Posterior cingulate gyrus (tissue), 11 donors: ENCODE measurements at regions of chr11 and their contacts with region 1.

Region 1: GRCh38 chr11:44286268-44286880 is 23.6 kb downstream of the ALX4 start:
- DNase-seq: peak in 4 of 10 donors; percentile 17 to 58 (median 28)

Region 2: GRCh38 chr11:44133335-44133946 is 152.9 kb before region 1 on chr11:
- intact Hi-C with region 1: loop called (anchors 10 kb)
- DNase-seq: no peak

Region 3: GRCh38 chr11:44538375-44539054 is 252.1 kb after region 1 on chr11:
- intact Hi-C with region 1: loop called (anchors 1 kb)
- DNase-seq: peak; percentile 64 to 97 (median 84)